Activated T-helper 1 cell treated with anti-CD3 and anti-CD28 coated beads, Interleukin-12 subunit alpha, Interleukin-12 subunit beta, Interleukin-2, Interleukin-4 antibody, amounts not matched to agents 30 ng/mL and 10 ng/mL and 1 ng/mL, durations not matched to agents 14 hours and 24 hours and 36 hours (primary cell): ENCODE measurements at regions of chr12 and their contacts with region 1.

Region 1: DNA sequence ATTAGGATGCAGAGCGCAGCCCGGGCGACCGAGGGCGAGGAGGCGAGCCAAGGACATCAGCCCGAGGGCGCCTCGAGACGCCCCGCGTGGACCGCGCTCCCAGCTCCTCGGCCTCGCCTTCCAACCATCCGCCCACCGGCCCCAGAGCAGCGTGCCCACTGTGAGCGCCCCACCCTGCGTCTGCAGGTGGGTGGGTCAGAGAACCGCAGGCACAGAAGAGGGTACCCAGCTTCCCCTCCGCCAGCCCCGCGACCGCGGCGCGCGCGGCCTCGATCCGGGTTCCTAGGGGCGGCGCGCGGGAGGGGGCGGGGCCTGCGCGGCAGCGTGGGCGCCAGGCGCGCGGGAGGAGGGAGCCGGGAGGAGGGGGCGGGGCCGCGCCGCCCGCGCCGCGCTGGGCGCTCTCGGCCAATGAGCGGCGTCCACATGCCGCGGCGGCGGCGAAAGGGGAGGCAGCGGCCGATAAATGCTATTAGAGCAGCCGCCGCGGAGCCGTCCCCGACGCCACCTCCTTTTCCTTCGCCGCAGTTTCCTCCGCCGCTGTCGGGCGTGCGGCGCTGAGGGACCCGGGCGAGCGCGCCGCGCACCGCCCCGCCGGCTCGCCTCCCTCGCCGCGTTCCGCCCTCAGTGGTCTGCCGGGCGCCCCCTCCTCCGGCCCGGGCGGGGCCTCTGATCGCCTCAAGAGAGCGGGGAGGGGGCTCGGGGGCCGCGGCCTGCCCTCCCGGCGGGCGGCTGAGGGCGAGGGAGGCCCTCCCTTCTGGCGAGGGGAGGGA is at the start of gene ATP2A2:
- DNase-seq: peak; percentile 89
- H3K4me3 Mint-ChIP-seq: peak within 1 kb of the TSS; percentile 90
- H3K27ac Mint-ChIP-seq: peak within 1 kb of the TSS; percentile 85
- H3K4me1 Mint-ChIP-seq: peaks cover 48% of the 10 kb centered on the region
- H3K27me3 Mint-ChIP-seq: peaks cover 3% of the 10 kb centered on the region
- total RNA-seq, gene ATP2A2: 208 and 211 TPM in 2 replicates

Region 2: DNA sequence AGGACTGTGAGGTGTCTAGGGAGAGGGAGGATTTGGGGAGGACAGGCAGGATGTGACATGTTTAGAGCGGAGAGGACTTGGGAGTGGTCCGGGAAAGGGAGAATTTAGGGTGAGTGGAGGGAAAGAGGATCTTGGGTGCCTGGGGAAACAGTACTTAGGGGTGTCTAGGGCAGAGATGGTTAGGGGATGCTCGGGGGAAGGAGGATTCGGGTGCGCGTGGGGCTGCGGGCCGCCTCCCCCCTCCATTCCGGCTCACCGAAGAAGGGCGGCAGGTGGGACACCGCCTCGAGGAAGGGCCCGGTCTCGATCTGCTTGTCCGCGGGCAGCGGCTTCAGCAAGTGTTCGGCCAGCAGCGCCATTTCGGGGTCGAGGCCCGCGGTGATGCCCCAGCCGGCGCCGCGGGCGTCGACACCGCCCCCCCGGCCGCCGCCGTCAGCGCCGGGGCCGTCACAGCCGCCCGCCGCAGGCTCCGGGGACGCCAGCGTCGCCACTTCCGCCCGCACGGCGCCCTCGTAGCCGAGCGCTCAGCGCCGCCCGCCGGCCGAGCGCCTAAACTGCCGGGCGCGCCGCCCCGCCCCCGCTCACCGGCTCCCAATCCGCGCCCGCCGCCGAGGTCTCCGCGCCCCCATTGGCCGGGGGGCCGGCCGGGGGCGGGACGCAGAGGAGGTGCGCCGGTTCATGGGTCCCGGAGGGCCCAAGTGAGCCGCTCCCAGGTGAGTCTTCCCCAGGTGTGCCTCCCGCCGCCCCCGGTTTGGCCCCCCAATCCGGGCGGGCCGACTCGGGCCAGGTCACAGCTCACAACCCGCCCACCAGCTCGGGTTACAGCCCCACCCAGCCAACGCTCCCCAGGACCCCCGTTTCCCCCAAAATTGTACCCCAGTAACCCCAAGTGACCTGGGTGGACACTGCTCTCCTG is 400.7 kb before region 1 on chr12 and contains the start of gene GLTP:
- intact Hi-C with region 1: loop called (anchors 5 kb)
- DNase-seq: peak; percentile 91
- H3K4me3 Mint-ChIP-seq: peak within 1 kb of the TSS; percentile 95
- H3K27ac Mint-ChIP-seq: peak within 1 kb of the TSS; percentile 87
- H3K4me1 Mint-ChIP-seq: peaks cover 29% of the 10 kb centered on the region
- H3K27me3 Mint-ChIP-seq: peaks cover 10% of the 10 kb centered on the region
- total RNA-seq, gene GLTP: 27.7 and 29.1 TPM in 2 replicates

Region 3: GRCh38 chr12:110079477-110080400 is 201.2 kb before region 1 on chr12:
- intact Hi-C with region 1: loop called (anchors 1 kb)
- DNase-seq: peak; percentile 76
- H3K4me3 Mint-ChIP-seq: peak overlapping the region; percentile 66
- H3K27ac Mint-ChIP-seq: peak overlapping the region; percentile 98
- H3K4me1 Mint-ChIP-seq: peaks cover 43% of the 10 kb centered on the region
- H3K27me3 Mint-ChIP-seq: no peaks in the 10 kb centered on the region

Region 4: GRCh38 chr12:110183386-110183785 is 97.6 kb before region 1 on chr12:
- intact Hi-C with region 1: no loop called
- DNase-seq: no peak
- H3K4me3 Mint-ChIP-seq: no peak overlapping the region
- H3K27ac Mint-ChIP-seq: no peak overlapping the region
- H3K4me1 Mint-ChIP-seq: no peaks in the 10 kb centered on the region
- H3K27me3 Mint-ChIP-seq: no peaks in the 10 kb centered on the region

Region 5: GRCh38 chr12:110316861-110317260 is 35.9 kb after region 1 on chr12:
- intact Hi-C with region 1: loop called (anchors 2 kb)
- DNase-seq: no peak
- H3K4me3 Mint-ChIP-seq: no peak overlapping the region
- H3K27ac Mint-ChIP-seq: peak overlapping the region; percentile 14
- H3K4me1 Mint-ChIP-seq: peaks cover 47% of the 10 kb centered on the region
- H3K27me3 Mint-ChIP-seq: no peaks in the 10 kb centered on the region

Region 6: GRCh38 chr12:110431957-110432587 is 151.1 kb after region 1 on chr12:
- intact Hi-C with region 1: loop called (anchors 1 kb)
- DNase-seq: no peak
- H3K4me3 Mint-ChIP-seq: no peak overlapping the region
- H3K27ac Mint-ChIP-seq: no peak overlapping the region
- H3K4me1 Mint-ChIP-seq: no peaks in the 10 kb centered on the region
- H3K27me3 Mint-ChIP-seq: peaks cover 4% of the 10 kb centered on the region

Region 7: DNA sequence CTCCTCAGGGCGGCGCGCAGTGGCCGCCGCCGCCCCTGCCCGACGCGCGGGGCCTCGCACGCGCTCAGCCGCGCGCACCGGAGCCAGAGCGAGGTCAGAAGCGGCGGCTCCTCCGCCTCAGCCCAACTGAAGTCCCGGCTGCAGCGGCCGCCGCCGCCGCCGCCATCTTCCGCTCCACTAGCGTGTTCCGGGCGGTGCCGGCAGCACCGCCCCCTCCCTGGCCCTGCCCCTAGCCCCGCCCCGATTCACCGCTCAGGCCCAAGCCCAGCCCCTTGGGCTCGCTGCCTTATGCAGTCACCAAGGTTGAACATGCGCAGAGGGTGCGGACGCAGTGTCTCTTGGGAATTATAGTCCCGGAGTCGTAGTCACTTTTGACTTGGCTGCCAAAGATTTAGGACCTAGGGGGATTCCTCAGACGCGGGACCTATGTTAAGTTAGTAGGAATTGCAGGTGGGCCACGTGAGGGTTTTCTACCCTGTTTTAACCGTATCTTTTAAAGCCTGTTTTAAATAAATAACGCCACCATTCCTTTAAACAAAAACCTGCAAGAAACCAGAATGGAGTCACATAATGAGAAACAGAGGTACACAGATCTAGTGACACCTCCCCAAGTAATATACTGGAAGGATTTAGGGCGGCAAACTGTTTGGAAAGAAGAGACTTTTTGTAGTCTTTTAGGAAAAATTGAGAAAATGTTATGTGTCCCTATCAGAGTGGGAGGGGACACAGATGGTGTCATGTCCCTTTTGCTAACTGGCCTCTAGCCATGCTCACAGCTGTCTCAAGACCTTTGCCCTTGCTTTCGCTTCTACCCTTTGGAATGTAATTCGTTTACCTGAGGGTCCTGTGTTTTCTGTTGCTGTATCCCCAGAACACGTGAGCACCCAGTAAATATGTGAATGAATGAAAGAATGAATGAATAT is 302.4 kb after region 1 on chr12 and contains the start of gene PPTC7:
- intact Hi-C with region 1: loop called (anchors 5 kb)
- DNase-seq: peak; percentile 93
- H3K4me3 Mint-ChIP-seq: peak within 1 kb of the TSS; percentile 95
- H3K27ac Mint-ChIP-seq: peak within 1 kb of the TSS; percentile 96
- H3K4me1 Mint-ChIP-seq: peaks cover 61% of the 10 kb centered on the region
- H3K27me3 Mint-ChIP-seq: peaks cover 3% of the 10 kb centered on the region
- total RNA-seq, gene PPTC7: 57.9 and 59.1 TPM in 2 replicates